GM12878 (cell line): ENCODE measurements at regions of chr7 and their contacts with region 1.

Region 1: DNA sequence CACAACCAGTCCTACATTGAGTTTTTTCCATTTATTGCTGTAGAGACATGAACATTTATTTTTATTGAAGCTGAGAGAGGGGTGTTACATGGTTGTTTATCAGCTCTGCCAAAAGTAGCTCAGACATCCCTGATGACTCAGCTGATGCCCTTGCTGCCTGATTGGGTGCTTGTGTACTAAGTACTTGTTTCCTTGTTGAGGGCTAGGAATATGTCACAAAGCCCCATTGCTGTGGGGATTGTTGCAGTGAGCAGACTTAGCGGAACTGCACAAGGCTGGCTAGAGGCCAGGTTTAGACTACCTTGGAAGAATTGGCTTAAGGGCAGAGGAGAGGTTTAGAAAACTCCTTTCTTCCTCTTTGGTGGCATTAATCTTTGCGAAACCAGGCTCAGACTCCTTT is 110.6 kb downstream of the AUTS2 start:
- DNase-seq: no peak
- ATAC-seq: peak; percentile 54
- H3K4me3 ChIP-seq: no peak overlapping the region
- H3K27ac ChIP-seq: no peak overlapping the region
- H3K4me1 ChIP-seq: 0 out of 2 replicates have a peak, but pooled peaks cover 5% of the 10 kb centered on the region
- H3K27me3 ChIP-seq: no peaks in the 10 kb centered on the region
- CTCF ChIP-seq: no peak
- EP300 ChIP-seq: no peak
- POLR2A ChIP-seq: no peak
- RAD21 ChIP-seq: no peak

Region 2: GRCh38 chr7:69489533-69489932 is 219.3 kb before region 1 on chr7:
- CTCF ChIA-PET with region 1: no interaction called
- POLR2A ChIA-PET with region 1: no interaction called
- RAD21 ChIA-PET with region 1: no interaction called
- SMC1A ChIA-PET with region 1: no interaction called
- in situ Hi-C with region 1: no loop called
- intact Hi-C with region 1: no loop called
- DNase-seq: no peak
- ATAC-seq: no peak
- H3K4me3 ChIP-seq: no peak overlapping the region
- H3K27ac ChIP-seq: no peak overlapping the region
- H3K4me1 ChIP-seq: 0 out of 2 replicates have a peak, but pooled peaks cover 3% of the 10 kb centered on the region
- H3K27me3 ChIP-seq: no peaks in the 10 kb centered on the region
- CTCF ChIP-seq: no peak
- EP300 ChIP-seq: no peak
- POLR2A ChIP-seq: no peak
- RAD21 ChIP-seq: no peak

Region 3: GRCh38 chr7:69728304-69728703 is 19.4 kb after region 1 on chr7:
- CTCF ChIA-PET with region 1: no interaction called
- POLR2A ChIA-PET with region 1: interaction called, 3 read pairs
- RAD21 ChIA-PET with region 1: interaction called, 4 read pairs
- SMC1A ChIA-PET with region 1: interaction called, 17 read pairs
- in situ Hi-C with region 1: no loop called
- intact Hi-C with region 1: no loop called
- DNase-seq: no peak
- ATAC-seq: no peak; the same call in 2 of the 3 replicates
- H3K4me3 ChIP-seq: no peak overlapping the region
- H3K27ac ChIP-seq: no peak overlapping the region
- H3K4me1 ChIP-seq: no peaks in the 10 kb centered on the region
- H3K27me3 ChIP-seq: no peaks in the 10 kb centered on the region; a peak in 1 of 4 replicates
- CTCF ChIP-seq: no peak
- EP300 ChIP-seq: no peak
- POLR2A ChIP-seq: no peak
- RAD21 ChIP-seq: no peak